AG04449 (cell line): ENCODE measurements at regions of chrX and their contacts with region 1.

Region 1: GRCh38 chrX:19017271-19017670 is 33.4 kb upstream of the PHKA2 start:
- DNase-seq: no peak
- H3K4me3 ChIP-seq: no peak overlapping the region
- CTCF ChIP-seq: peak; percentile 38

Region 2: DNA sequence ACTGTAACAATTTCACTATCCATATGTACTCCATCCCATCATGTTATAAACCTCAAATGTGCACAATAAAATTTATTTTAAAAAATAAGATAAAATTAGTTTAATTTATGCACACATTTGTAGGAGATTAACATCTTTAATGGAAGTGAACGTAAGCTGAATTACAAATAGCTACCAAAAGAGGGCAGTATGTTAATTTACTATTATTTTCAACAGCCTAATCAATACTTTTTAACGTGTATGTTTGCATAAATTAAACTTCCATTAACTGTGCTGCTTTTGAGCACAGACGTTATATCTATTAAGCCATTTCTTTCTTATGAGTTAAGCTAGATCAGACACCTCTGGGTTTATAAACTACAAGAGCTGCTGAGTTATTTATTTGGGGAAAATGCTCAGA is 23.1 kb after region 1 on chrX:
- CTCF ChIA-PET with region 1: interaction called, 21 read pairs
- POLR2A ChIA-PET with region 1: no interaction called
- DNase-seq: no peak
- H3K4me3 ChIP-seq: no peak overlapping the region
- CTCF ChIP-seq: no peak